Activated CD8-positive, alpha-beta T cell treated with anti-CD3 and anti-CD28 coated beads, Interleukin-2, amount 10 ng/mL, durations not matched to agents 7 days and 5 days (primary cell): ENCODE measurements at regions of chr20 and their contacts with region 1.

Region 1: DNA sequence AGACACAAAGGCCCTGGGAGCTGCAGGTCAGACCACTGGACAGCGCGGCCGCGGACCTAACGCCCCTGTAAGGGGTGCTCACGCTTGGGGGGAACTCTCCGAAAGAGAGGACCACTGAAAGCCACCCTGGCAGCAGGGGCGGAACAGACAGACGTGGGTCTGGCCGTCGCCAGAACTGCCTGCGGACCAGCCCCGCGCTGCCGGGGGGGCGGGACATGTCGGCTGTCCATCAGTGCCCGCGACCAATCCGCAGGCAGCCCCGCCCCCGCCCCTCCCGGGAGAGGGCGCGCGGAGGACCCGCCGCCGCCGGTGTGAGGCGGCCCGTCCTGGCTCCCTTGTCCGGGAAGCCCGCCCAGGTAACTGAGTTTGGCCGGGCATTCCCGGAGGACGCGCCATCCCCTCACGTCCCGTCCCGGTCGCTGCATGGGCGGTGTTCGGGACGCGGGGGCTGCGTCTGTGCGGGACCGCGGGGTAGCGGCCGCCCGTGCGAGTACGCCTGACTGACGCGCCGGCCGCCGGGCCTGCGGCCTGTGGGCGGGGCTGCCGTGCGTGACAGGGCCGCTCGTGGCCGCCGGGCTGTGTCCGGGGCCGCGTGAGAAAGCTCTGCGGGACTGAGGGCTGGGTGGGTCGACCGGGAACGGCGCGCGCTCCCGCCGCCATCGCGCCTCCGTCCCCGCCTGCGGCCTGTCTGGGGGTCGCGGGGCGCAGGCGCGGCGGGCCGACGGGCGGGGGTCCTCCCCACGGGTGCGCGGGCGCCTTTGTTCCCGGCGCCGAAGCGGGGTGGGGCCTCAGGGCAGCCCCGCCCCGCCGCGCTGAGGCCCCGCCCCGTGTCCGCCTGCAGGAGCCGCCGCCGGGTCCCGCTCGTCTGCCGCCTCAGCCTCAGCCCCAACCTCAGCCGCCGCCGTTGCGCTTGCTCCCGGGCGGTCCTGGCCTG is at the start of gene PLCG1:
- DNase-seq: peak; percentile 88
- ATAC-seq: peak; percentile 66
- H3K4me3 Mint-ChIP-seq: peak within 1 kb of the TSS; percentile 91
- H3K27ac Mint-ChIP-seq: peak within 1 kb of the TSS; percentile 94
- H3K4me1 Mint-ChIP-seq: peaks cover 54% of the 10 kb centered on the region
- H3K27me3 Mint-ChIP-seq: no peaks in the 10 kb centered on the region
- total RNA-seq, gene PLCG1: 395 to 406 TPM

Region 2: DNA sequence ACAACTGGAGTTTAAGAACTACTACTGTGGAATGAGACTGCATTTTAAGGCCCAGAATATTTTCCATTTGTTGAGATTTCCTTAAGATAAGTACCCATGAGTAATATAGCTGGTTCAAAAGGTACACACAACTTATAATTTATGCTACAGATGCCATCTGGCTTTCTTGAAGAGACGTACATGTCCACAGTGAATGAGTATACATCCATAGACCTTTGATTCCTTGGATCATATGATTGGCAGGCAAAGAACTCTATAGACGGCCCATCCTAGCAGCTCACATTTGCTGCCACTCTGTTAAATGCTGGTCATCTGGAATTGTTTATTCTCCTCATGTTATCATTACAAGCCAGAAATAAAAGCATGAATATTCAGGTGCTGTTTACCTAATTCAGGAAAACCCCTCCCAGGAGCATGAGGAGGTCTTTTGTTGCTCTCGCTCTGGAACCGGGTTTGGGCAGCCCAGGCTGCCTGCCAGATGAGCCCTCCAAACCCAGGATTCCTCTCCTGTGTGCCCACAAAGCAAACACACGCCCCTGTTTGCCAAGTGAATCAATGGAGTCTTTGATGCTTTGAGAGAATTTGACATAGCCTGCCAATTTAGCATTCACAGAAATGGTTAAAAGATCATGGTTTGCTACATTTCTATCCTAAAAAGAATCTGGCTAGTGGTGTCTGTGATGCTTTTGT is 17.3 kb before region 1 on chr20:
- CTCF ChIA-PET with region 1: interaction called, 33 read pairs
- POLR2A ChIA-PET with region 1: interaction called, 3 read pairs
- DNase-seq: no peak
- ATAC-seq: no peak
- H3K4me3 Mint-ChIP-seq: no peak overlapping the region
- H3K27ac Mint-ChIP-seq: peak overlapping the region; percentile 16
- H3K4me1 Mint-ChIP-seq: peaks cover 16% of the 10 kb centered on the region
- H3K27me3 Mint-ChIP-seq: no peaks in the 10 kb centered on the region

Region 3: DNA sequence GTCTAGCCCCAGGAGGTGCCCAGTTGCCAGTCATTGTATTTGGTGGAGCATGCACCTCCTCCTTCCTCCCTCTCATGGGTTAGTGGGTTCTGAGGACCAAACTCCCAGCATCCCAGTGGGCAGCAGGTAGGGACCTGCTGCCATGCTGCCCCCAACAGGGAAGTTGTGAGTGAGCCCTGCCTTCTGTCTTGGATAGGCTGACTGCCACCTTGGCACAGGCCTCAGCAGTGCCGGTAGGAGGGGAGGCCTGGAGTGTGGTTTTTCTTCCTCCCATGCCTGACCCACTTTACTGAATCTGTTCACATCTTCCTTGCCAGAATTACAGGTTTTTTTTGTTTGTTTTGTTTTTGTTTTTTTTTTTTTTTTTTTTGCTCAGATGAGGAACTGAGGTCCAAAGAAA is 24.9 kb after region 1 on chr20:
- CTCF ChIA-PET with region 1: interaction called, 347 read pairs
- POLR2A ChIA-PET with region 1: interaction called, 343 read pairs
- DNase-seq: no peak
- ATAC-seq: no peak
- H3K4me3 Mint-ChIP-seq: no peak overlapping the region
- H3K27ac Mint-ChIP-seq: peak overlapping the region; percentile 71
- H3K4me1 Mint-ChIP-seq: peaks cover 92% of the 10 kb centered on the region
- H3K27me3 Mint-ChIP-seq: no peaks in the 10 kb centered on the region

Region 4: DNA sequence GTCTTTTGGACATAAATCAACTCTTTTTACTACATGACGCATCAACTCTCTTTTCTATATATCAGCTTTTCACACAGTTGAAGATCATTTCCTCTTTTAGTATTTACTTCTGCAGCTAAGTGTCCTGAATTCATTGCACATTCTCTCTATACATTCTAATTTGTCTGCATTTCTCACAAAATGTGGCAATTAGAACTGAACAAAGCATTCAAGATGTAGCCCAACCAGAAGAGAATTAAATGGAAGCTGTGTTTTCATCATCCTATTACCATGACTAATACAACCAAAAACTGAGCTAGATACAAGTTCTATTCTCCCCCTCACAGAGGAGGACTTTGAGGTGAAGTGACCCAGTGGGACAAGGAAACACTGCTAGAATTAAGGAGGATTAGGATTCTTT is 87.3 kb after region 1 on chr20:
- CTCF ChIA-PET with region 1: interaction called, 84 read pairs
- POLR2A ChIA-PET with region 1: no interaction called
- DNase-seq: no peak
- ATAC-seq: no peak
- H3K4me3 Mint-ChIP-seq: no peak overlapping the region
- H3K27ac Mint-ChIP-seq: no peak overlapping the region
- H3K4me1 Mint-ChIP-seq: peaks cover 15% of the 10 kb centered on the region
- H3K27me3 Mint-ChIP-seq: no peaks in the 10 kb centered on the region

Region 5: GRCh38 chr20:41329435-41330342 is 192.7 kb after region 1 on chr20:
- CTCF ChIA-PET with region 1: interaction called, 11 read pairs
- POLR2A ChIA-PET with region 1: no interaction called
- DNase-seq: peak; percentile 78
- ATAC-seq: peak; percentile 100
- H3K4me3 Mint-ChIP-seq: no peak overlapping the region
- H3K27ac Mint-ChIP-seq: peak overlapping the region; percentile 73
- H3K4me1 Mint-ChIP-seq: peaks cover 18% of the 10 kb centered on the region
- H3K27me3 Mint-ChIP-seq: peaks cover 4% of the 10 kb centered on the region